ENCODE measurements at regions of chr20 and their contacts with region 1.

Region 1: DNA sequence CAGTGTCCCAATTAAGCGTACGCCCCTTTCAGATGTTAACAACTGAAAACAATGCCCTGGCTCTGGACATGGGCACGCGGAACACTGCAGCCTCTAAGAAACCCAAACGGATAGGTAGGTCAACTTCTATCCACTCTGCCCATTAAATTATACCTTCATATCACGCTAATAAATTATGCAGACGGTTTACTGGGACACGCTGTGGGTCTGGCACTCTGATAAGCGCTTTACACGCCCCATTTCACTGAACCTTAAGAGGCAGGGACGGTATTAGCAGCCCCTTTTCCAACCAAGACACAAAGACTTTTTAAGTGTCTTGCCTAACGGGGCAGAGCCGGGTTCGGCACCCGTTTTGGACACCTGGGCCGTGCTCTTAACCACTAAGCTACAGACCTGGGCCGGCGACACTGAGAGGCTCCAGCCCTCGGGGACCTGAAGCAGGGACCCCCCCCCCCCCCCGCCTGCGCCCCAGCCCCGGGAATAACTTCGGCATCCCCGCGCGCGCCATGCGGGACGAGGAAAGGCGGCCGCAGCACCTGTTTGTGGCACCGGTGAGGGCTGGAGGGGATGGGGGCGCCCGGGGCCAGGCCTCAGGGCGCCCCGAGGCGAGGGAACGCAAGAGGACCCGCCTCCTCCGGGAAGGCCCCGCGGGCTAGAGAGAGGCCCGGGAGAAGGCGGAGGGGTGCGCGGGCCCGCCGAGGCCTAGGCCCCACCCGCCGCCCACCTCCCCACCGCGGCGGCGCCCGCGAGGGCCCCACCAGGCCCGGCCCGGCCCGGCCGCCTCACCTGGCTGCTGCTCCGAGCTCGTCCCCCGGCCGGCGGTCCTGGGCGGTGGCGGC is 585 bp downstream of the STAU1 start:
- DNase-seq: no peak
- ATAC-seq: no peak

Region 2: DNA sequence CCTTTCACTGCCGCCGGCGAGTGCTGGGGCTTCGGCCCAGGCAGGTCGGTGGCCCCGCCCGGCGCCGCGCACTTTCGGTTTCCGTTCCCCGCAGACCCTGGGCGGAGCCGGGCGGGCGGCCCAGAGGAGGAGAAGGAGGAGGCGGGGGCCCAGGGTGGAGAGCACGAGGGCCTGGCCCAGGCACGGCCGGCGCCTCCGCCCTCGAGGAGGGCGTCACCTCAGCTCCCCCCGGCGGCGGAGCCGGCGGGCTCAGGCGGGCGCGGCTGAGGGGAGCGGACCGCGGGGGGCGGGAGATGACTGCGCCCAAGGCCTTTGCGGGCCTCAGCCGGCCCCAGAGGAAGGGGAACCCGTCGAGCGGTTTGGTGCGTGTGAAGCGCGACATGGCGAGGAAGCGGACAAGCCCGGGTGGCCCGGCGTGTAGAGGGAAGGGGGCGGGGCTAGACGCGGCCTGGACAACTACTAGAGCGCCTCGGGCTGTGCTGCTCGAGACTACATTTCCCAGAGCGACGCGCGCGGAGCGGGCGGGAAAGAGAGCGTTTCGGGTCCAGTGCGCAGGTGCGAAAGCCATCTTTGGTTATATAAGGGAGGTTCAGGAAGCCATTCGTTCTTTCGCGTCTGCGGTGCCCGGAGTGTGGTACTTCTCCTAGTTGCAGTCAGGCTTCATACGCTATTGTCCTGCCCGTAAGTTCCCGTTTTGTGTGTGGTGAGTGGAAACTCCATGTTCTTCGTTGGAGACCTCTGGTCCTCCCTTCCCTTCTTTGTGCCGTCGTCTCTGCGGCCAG is 90.7 kb after region 1 on chr20 and contains the start of gene ZNFX1:
- intact Hi-C with region 1: loop called (anchors 2 kb)
- DNase-seq: peak; percentile 100
- ATAC-seq: peak; percentile 97
- total RNA-seq, gene ZNFX1: 21.0 TPM